CD8-positive, alpha-beta T cell (primary cell): ENCODE measurements at regions of chr12 and their contacts with region 1.

Region 1: GRCh38 chr12:71636704-71637115 is 26.9 kb downstream of the ZFC3H1 start:
- DNase-seq: peak in 2 of 9 experiments; percentile 69 to 79
- ATAC-seq: peak; percentile 80
- H3K4me3 ChIP-seq: no peak overlapping the region
- H3K4me3 Mint-ChIP-seq: no peak overlapping the region
- H3K27ac ChIP-seq: no peak overlapping the region
- H3K27ac Mint-ChIP-seq: peak overlapping the region; percentile 78
- H3K4me1 ChIP-seq: no peaks in the 10 kb centered on the region
- H3K4me1 Mint-ChIP-seq: peaks cover 13% of the 10 kb centered on the region
- H3K27me3 ChIP-seq: no peaks in the 10 kb centered on the region
- H3K27me3 Mint-ChIP-seq: no peaks in the 10 kb centered on the region
- CTCF ChIP-seq: peak; percentile 82

Region 2: DNA sequence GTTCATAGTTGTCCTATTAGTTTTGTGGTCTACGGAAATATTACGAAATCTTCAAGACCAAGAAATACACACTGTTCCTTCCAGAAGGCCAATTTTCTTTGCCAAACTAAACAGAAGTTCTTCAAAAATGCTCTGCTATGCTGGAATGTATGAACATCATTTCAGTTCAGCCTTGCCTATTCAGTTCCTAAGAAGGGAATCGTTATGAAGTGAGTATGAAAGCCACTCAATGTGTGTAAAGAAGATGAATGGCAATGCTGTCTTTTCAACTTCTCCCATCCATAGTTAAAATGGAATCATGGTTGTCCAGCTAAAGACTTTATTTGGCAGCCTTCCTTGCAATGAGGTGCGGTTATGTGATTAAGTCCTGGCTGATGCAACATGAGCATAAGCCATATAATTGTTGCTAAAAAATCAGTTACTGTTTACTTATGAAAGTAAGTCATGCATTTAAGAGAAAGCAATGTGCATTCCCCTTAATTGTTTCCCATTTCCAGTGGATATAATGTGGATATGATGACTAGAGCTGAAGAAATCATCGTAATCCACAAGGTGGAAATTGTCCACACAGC is 642.4 kb before region 1 on chr12:
- CTCF ChIA-PET with region 1: no interaction called
- POLR2A ChIA-PET with region 1: no interaction called
- intact Hi-C with region 1: no loop called
- DNase-seq: no peak
- ATAC-seq: no peak
- H3K4me3 ChIP-seq: no peak overlapping the region
- H3K4me3 Mint-ChIP-seq: no peak overlapping the region
- H3K27ac ChIP-seq: no peak overlapping the region
- H3K27ac Mint-ChIP-seq: no peak overlapping the region
- H3K4me1 ChIP-seq: no peaks in the 10 kb centered on the region
- H3K4me1 Mint-ChIP-seq: no peaks in the 10 kb centered on the region
- H3K27me3 ChIP-seq: no peaks in the 10 kb centered on the region
- H3K27me3 Mint-ChIP-seq: no peaks in the 10 kb centered on the region
- CTCF ChIP-seq: no peak

Region 3: DNA sequence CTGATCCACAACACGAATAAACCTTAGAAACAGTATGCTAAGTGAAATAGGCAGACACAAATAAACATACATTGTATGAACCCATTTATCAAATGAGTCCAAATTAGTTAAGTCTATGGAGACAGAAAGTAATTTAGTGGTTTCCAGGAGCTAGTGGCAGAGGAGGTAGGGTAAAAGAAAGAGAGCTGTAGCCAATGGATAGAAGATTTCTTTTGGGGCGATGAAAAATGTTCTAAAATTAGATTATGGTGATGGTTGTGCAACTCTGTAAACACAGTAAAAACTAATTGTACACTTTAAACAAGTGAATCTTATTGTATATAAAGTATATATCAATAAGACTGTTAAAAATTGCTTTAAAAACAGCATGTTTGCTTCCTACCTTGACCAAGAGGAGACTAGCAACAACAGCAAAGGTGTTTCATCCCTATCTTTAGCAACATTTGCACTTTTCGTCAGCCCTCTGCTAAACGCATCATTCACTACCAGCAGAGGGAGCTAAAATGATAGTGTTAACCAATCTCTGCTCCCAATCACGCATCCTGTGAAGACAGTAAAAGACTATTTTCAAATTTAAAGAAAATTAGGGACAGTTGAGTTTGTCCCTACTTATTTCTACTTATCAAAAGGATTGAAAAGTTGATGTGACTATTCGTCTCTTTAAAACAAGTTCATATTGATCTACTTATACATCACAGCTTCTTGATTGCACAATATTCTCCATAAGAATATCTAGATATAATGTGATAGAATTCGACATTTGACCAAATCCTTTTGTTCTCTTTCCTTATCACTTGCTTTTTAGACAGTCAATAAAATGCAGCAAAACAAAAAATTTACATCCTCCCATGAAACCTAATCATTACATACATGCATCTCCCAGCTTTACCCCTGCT is 221.1 kb before region 1 on chr12:
- CTCF ChIA-PET with region 1: interaction called, 8 read pairs
- POLR2A ChIA-PET with region 1: no interaction called
- intact Hi-C with region 1: loop called (anchors 1 to 2 kb)
- DNase-seq: peak in 3 of 9 experiments; percentile 9 to 66 (median 54)
- ATAC-seq: no peak
- H3K4me3 ChIP-seq: no peak overlapping the region
- H3K4me3 Mint-ChIP-seq: no peak overlapping the region
- H3K27ac ChIP-seq: no peak overlapping the region
- H3K27ac Mint-ChIP-seq: no peak overlapping the region
- H3K4me1 ChIP-seq: no peaks in the 10 kb centered on the region
- H3K4me1 Mint-ChIP-seq: no peaks in the 10 kb centered on the region
- H3K27me3 ChIP-seq: no peaks in the 10 kb centered on the region
- H3K27me3 Mint-ChIP-seq: peaks cover 3% of the 10 kb centered on the region
- CTCF ChIP-seq: peak; percentile 68

Region 4: DNA sequence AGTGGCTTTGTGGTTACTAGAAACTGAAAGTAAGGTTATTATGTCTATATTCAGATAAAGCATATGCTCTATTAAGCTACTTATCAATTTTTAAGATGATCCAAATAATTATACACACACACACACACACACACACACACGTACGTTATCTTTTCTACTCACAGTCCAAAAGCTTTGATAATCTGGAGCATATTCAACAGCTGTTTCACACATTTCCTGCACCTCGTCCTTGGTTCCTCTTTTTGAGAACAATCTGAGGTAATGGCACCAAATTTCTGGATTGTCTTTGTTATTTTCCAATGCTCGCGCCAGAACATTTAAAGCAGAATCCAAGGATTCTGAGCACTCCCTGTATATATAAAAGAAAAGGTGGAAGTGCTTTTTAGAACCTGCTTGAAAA is 10.6 kb before region 1 on chr12:
- CTCF ChIA-PET with region 1: interaction called, 6 read pairs
- POLR2A ChIA-PET with region 1: interaction called, 3 read pairs
- intact Hi-C with region 1: loop called in 1 of 2 experiments (anchors 1 kb)
- DNase-seq: no peak
- ATAC-seq: no peak
- H3K4me3 ChIP-seq: no peak overlapping the region
- H3K4me3 Mint-ChIP-seq: peak overlapping the region; percentile 12
- H3K27ac ChIP-seq: no peak overlapping the region
- H3K27ac Mint-ChIP-seq: peak overlapping the region; percentile 8
- H3K4me1 ChIP-seq: no peaks in the 10 kb centered on the region
- H3K4me1 Mint-ChIP-seq: peaks cover 26% of the 10 kb centered on the region
- H3K27me3 ChIP-seq: no peaks in the 10 kb centered on the region
- H3K27me3 Mint-ChIP-seq: no peaks in the 10 kb centered on the region
- CTCF ChIP-seq: no peak

Region 5: DNA sequence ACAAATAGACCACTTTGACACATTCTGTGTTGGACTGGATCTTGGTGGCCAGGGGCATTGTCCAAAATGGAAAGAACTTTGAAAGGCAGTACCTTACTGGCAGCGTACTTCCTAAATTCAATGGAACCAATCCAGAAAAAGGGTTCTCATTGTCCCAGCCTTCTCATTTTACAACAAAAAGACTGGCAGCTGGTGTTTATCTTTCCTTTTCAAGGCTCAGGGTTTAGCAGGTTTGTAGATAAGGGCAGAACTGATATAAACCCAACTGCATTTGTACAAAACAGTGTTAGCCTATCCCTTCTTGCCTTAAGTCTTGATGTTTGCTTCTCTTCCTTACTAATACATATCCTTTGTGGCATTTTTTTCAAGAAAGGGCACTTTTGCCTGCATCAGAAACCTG is 35.1 kb after region 1 on chr12:
- CTCF ChIA-PET with region 1: no interaction called
- POLR2A ChIA-PET with region 1: no interaction called
- intact Hi-C with region 1: no loop called
- DNase-seq: no peak
- ATAC-seq: no peak
- H3K4me3 ChIP-seq: no peak overlapping the region
- H3K4me3 Mint-ChIP-seq: no peak overlapping the region
- H3K27ac ChIP-seq: no peak overlapping the region
- H3K27ac Mint-ChIP-seq: no peak overlapping the region
- H3K4me1 ChIP-seq: no peaks in the 10 kb centered on the region
- H3K4me1 Mint-ChIP-seq: peaks cover 10% of the 10 kb centered on the region
- H3K27me3 ChIP-seq: no peaks in the 10 kb centered on the region
- H3K27me3 Mint-ChIP-seq: no peaks in the 10 kb centered on the region
- CTCF ChIP-seq: no peak

Region 6: DNA sequence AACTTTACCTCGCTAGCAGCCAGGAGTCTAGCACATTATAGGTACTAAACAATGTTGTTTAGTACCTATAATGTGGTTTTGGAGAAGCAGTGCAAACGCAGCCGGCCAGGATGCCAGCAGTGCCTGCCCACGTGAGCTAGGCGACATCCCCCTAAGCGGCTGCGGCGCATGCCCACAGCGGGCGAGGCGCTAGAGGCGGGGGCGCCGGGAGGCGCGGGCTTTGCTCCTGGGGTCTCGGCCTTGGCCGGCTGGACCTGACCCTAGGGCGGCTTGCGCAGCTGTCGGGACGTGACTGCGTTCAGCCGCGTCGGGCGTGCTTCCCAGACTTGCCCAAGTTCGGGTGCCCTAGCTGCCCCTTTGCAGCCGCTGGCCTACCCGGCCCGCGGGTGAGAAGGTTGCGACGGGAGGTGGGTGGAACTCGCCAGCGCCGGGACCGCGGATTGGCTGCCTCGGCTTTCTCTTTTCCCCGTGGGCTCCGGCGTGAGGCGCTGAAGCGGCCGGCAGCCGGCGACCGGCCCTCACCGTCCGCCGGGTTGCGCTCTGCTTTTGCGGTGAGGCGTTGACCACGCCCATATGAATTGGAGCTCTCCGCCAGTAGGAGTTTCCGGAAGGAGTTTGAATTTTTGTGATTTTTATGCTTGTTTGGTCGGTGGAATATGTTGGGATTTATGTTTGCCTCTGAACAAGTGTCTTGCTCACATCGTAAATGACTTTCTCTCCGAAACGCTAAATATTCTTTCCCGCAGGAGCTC is 49.4 kb after region 1 on chr12 and contains the start of gene TMEM19:
- CTCF ChIA-PET with region 1: interaction called, 5 read pairs
- POLR2A ChIA-PET with region 1: no interaction called
- intact Hi-C with region 1: loop called (anchors 2 to 10 kb)
- DNase-seq: peak; percentile 65 to 92 (median 83)
- ATAC-seq: peak; percentile 88
- H3K4me3 ChIP-seq: peak within 1 kb of the TSS; percentile 66 to 95
- H3K4me3 Mint-ChIP-seq: peak within 1 kb of the TSS; percentile 96
- H3K27ac ChIP-seq: peak within 1 kb of the TSS; percentile 71 to 74
- H3K27ac Mint-ChIP-seq: peak within 1 kb of the TSS; percentile 94
- H3K4me1 ChIP-seq: peaks cover 33% of the 10 kb centered on the region
- H3K4me1 Mint-ChIP-seq: peaks cover 45% of the 10 kb centered on the region
- H3K27me3 ChIP-seq: no peaks in the 10 kb centered on the region
- H3K27me3 Mint-ChIP-seq: no peaks in the 10 kb centered on the region
- CTCF ChIP-seq: no peak
- total RNA-seq, gene TMEM19: 8.8 to 10.0 TPM

Region 7: GRCh38 chr12:71900091-71900490 is 263.4 kb after region 1 on chr12:
- CTCF ChIA-PET with region 1: interaction called, 3 read pairs
- POLR2A ChIA-PET with region 1: no interaction called
- intact Hi-C with region 1: loop called in 1 of 2 experiments (anchors 10 kb)
- DNase-seq: no peak
- ATAC-seq: no peak
- H3K4me3 ChIP-seq: no peak overlapping the region
- H3K4me3 Mint-ChIP-seq: no peak overlapping the region
- H3K27ac ChIP-seq: no peak overlapping the region
- H3K27ac Mint-ChIP-seq: no peak overlapping the region
- H3K4me1 ChIP-seq: no peaks in the 10 kb centered on the region
- H3K4me1 Mint-ChIP-seq: no peaks in the 10 kb centered on the region
- H3K27me3 ChIP-seq: no peaks in the 10 kb centered on the region
- H3K27me3 Mint-ChIP-seq: no peaks in the 10 kb centered on the region
- CTCF ChIP-seq: no peak